GM13977 (cell line): ENCODE measurements at regions of chr12 and their contacts with region 1.

Region 1: GRCh38 chr12:17763366-17763765 is 326.6 kb downstream of the RERGL start:
- DNase-seq: no peak
- CTCF ChIP-seq: no peak

Region 2: DNA sequence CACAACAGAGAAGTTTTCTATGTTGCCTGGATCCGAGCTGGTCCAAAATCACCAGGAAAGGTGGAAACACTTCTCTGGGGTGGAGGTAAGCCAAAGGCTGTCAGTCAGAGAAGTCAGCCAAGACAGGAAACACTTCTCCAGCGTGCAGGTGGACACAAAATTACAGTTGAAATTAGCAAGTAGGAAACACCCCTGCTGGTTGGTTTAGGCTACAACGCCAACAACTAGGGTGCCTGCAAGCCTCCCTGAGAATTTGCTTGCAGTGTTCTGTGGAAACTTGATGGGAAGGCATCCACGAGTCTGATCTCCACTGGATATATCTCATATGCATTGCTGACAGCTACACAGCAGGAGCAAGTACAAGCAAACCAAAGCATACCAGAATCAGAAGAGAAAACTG is 273.9 kb before region 1 on chr12:
- in situ Hi-C with region 1: no loop called
- DNase-seq: no peak
- CTCF ChIP-seq: no peak

Region 3: GRCh38 chr12:17841496-17841895 is 78.1 kb after region 1 on chr12:
- in situ Hi-C with region 1: loop called (anchors 10 kb)
- DNase-seq: no peak
- CTCF ChIP-seq: no peak